ENCODE measurements at regions of chr20 and their contacts with region 1.

Region 1: DNA sequence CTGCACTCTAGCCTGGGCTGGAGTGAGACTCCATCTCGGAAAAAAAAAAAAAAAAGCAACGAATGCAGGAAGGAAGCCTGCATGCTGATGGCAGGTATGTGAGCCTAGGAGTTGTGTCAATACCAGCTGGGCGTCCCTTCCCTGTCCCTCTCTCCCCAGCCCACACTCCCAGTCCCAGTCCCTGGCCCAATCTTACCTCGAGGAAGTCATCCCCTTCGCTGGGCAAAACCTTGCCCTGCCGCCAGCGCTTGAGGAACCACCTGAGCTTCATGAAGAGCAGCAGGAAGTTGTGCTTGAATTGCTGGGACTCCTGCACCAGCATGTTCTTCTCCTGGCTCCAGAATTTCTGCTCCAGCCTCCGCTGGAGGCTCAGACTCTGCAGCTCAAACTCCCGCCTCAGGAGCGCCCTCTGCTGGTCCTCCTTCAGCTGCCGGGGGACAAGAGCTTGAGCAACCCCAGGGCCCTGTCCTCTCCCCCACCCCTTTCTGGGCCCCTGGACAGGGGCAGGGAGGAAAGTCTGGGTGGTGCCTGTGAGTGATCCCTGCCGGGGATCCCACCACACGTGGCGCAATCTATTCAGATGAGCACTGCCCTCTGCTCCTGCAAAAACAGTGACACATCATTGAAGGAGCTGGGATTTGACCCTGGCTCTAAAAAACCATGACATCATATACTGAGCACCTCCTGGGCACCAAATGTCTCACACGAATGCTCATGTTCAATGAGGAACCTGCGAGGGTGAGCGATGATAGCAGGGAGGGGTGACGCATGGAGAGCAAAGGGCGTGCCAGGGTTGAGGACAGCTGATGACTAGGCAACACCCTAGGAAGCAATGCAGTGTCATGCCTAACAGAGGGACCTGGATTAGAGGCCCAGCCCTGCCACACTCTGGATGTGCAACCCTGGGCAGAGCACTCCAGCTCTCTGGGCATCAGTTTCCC is 35.0 kb upstream of the DSN1 start:
- DNase-seq: peak; percentile 87
- H3K4me3 Mint-ChIP-seq: no peak overlapping the region
- H3K27ac Mint-ChIP-seq: no peak overlapping the region
- H3K4me1 Mint-ChIP-seq: no peaks in the 10 kb centered on the region
- H3K27me3 Mint-ChIP-seq: no peaks in the 10 kb centered on the region

Region 2: GRCh38 chr20:36493013-36493800 is 315.4 kb before region 1 on chr20:
- CTCF ChIA-PET with region 1: no interaction called
- intact Hi-C with region 1: no loop called
- DNase-seq: peak; percentile 71
- H3K4me3 Mint-ChIP-seq: no peak overlapping the region
- H3K27ac Mint-ChIP-seq: no peak overlapping the region
- H3K4me1 Mint-ChIP-seq: peaks cover 28% of the 10 kb centered on the region
- H3K27me3 Mint-ChIP-seq: no peaks in the 10 kb centered on the region

Region 3: DNA sequence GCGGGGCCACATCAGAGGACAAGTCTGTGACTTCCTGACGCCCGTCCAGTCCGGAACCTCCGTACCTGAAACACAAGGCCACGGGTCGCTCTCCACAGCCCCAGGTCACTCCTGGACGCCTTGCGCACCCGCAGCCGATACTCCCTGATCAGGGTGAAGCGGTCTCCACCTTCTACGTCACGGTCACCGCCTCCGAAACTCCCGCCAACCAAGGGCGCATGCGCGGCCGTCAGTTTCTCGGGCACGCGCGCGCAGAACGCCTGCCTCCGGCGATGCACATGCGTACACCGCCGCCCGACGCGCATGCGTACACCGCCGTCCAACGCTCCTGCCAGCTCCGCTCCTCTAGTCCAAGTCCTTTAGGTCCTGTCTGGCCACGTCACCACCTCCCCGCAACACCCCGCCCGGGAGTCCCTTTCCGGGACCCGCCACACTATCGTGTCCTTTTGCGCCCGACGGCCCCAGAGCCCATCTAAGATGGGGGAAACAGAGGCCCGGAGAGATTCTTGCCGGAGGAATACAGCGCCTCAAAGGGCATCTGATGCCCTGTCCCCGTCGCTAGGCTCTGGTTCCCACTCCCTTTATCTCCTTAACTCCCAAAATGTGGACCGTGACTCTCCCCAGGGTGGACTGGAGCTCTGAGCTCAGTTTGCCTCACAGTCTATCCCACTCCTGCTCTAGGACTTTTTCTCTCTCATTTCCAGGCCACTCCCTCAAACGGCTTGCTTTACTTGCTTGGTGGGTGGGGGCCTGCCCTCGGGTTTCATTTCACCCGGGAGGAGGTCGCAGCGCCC is 34.8 kb before region 1 on chr20 and contains the start of gene DSN1:
- CTCF ChIA-PET with region 1: interaction called, 16 read pairs
- intact Hi-C with region 1: no loop called
- DNase-seq: peak; percentile 98
- H3K4me3 Mint-ChIP-seq: peak within 1 kb of the TSS; percentile 97
- H3K27ac Mint-ChIP-seq: peak within 1 kb of the TSS; percentile 97
- H3K4me1 Mint-ChIP-seq: peaks cover 21% of the 10 kb centered on the region
- H3K27me3 Mint-ChIP-seq: no peaks in the 10 kb centered on the region
- total RNA-seq, gene DSN1: 23.0 to 24.7 TPM

Region 4: DNA sequence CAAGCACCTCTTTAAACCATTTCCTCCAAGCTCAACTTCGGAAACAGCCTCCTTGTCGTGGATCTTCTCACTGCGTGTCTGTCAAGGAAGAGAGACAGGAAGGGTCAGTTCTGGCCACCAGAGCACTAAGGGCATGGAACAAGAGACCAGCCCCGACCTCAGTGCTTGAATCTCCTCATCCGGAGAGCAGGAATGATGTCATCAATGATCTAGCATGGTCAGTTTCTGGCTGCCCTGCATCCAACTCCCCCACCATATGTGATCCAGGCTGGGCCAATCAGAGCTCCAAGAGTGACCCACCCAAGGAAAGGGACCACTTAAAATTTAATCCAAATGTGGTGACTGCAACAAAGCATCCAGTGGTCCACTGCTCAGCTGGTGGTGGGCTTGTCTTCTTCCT is 11.7 kb before region 1 on chr20:
- CTCF ChIA-PET with region 1: interaction called, 12 read pairs
- intact Hi-C with region 1: no loop called
- DNase-seq: no peak
- H3K4me3 Mint-ChIP-seq: no peak overlapping the region
- H3K27ac Mint-ChIP-seq: no peak overlapping the region
- H3K4me1 Mint-ChIP-seq: no peaks in the 10 kb centered on the region
- H3K27me3 Mint-ChIP-seq: no peaks in the 10 kb centered on the region

Region 5: GRCh38 chr20:36819659-36820058 is 11.1 kb after region 1 on chr20:
- CTCF ChIA-PET with region 1: interaction called, 17 read pairs
- intact Hi-C with region 1: no loop called
- DNase-seq: no peak
- H3K4me3 Mint-ChIP-seq: no peak overlapping the region
- H3K27ac Mint-ChIP-seq: no peak overlapping the region
- H3K4me1 Mint-ChIP-seq: no peaks in the 10 kb centered on the region
- H3K27me3 Mint-ChIP-seq: no peaks in the 10 kb centered on the region

Region 6: GRCh38 chr20:36886859-36887751 is 78.5 kb after region 1 on chr20:
- CTCF ChIA-PET with region 1: interaction called, 15 read pairs
- intact Hi-C with region 1: loop called (anchors 2 kb)
- DNase-seq: peak; percentile 92
- H3K4me3 Mint-ChIP-seq: no peak overlapping the region
- H3K27ac Mint-ChIP-seq: peak overlapping the region; percentile 54
- H3K4me1 Mint-ChIP-seq: peaks cover 10% of the 10 kb centered on the region
- H3K27me3 Mint-ChIP-seq: no peaks in the 10 kb centered on the region